Gastrocnemius medialis (tissue), 4 donors: ENCODE measurements at regions of chr21 and their contacts with region 1.

Region 1: GRCh38 chr21:45130324-45130774 is 56.0 kb downstream of the ADARB1 start:
- DNase-seq: no peak
- ATAC-seq: no peak
- H3K4me3 ChIP-seq: peak overlapping the region; percentile 2 to 24 (median 22)
- H3K27ac ChIP-seq: peak overlapping the region; percentile 68 to 79 (median 74)
- H3K4me1 ChIP-seq: peaks cover 66 to 71% of the 10 kb centered on the region in 2 donors
- H3K27me3 ChIP-seq: no peaks in the 10 kb centered on the region
- CTCF ChIP-seq: no peak
- POLR2A ChIP-seq: peak in 1 of 2 donors; percentile 50

Region 2: GRCh38 chr21:43639470-43640178 is 1490.7 kb before region 1 on chr21:
- in situ Hi-C with region 1: no loop called
- intact Hi-C with region 1: no loop called
- DNase-seq: no peak
- ATAC-seq: no peak
- H3K4me3 ChIP-seq: no peak overlapping the region
- H3K27ac ChIP-seq: no peak overlapping the region
- H3K4me1 ChIP-seq: no peaks in the 10 kb centered on the region
- H3K27me3 ChIP-seq: no peaks in the 10 kb centered on the region
- CTCF ChIP-seq: no peak
- POLR2A ChIP-seq: no peak

Region 3: DNA sequence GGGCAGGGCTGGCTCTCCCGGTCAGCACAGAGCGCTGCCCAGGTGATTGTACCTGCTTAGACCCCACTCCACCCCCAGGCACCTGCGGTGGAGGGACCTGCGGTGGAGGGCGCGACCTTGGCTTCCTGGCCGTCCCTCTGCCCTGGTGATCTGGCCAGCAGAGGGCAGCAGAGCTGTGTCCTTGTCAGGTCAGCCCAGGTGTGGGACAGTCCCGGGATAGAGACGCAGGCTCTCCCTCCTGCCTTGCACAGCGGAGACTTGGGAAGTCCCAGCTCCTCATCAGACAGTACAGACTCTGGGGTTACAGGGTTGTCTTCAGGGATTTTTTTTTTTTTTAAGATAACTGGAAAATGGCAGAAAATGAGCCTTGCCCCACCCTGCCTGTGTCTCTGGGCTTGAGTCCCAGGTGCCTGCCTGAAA is 180.6 kb before region 1 on chr21:
- in situ Hi-C with region 1: loop called (anchors 5 kb)
- intact Hi-C with region 1: loop called (anchors 1 kb)
- DNase-seq: peak; percentile 82 to 94
- ATAC-seq: peak; percentile 40 to 53
- H3K4me3 ChIP-seq: no peak overlapping the region
- H3K27ac ChIP-seq: peak overlapping the region; percentile 47 to 96 (median 92)
- H3K4me1 ChIP-seq: peaks cover 63 to 64% of the 10 kb centered on the region in 2 donors
- H3K27me3 ChIP-seq: no peaks in the 10 kb centered on the region
- CTCF ChIP-seq: peak; percentile 90 to 98 (median 96)
- POLR2A ChIP-seq: peak in 1 of 2 donors; percentile 8

Region 4: GRCh38 chr21:45074048-45074817 is 56.1 kb before region 1 on chr21 and contains the start of gene ADARB1:
- in situ Hi-C with region 1: loop called in 1 of 4 experiments (anchors 10 kb)
- intact Hi-C with region 1: loop called (anchors 2 kb)
- DNase-seq: peak in 1 of 2 donors; percentile 51
- ATAC-seq: peak; percentile 80 to 85
- H3K4me3 ChIP-seq: peak within 1 kb of the TSS; percentile 72 to 90 (median 80)
- H3K27ac ChIP-seq: peak within 1 kb of the TSS; percentile 84 to 95 (median 91)
- H3K4me1 ChIP-seq: peaks cover 33 to 40% of the 10 kb centered on the region in 2 donors
- H3K27me3 ChIP-seq: no peaks in the 10 kb centered on the region
- CTCF ChIP-seq: no peak
- POLR2A ChIP-seq: peak; percentile 89 to 90
- total RNA-seq, gene ADARB1: 5.9 to 11.5 (median 6.9) TPM